ENCODE measurements at regions of chr3 and their contacts with region 1.

Region 1: GRCh38 chr3:15064835-15065549 is at the start of gene MRPS25:
- DNase-seq: peak; percentile 84
- ATAC-seq: peak; percentile 97
- H3K4me3 Mint-ChIP-seq: peak within 1 kb of the TSS; percentile 98
- H3K27ac Mint-ChIP-seq: peak within 1 kb of the TSS; percentile 95
- H3K4me1 Mint-ChIP-seq: peaks cover 25% of the 10 kb centered on the region
- H3K27me3 Mint-ChIP-seq: no peaks in the 10 kb centered on the region
- CTCF ChIP-seq: no peak
- total RNA-seq, gene MRPS25: 72.4 and 85.9 TPM in 2 replicates

Region 2: DNA sequence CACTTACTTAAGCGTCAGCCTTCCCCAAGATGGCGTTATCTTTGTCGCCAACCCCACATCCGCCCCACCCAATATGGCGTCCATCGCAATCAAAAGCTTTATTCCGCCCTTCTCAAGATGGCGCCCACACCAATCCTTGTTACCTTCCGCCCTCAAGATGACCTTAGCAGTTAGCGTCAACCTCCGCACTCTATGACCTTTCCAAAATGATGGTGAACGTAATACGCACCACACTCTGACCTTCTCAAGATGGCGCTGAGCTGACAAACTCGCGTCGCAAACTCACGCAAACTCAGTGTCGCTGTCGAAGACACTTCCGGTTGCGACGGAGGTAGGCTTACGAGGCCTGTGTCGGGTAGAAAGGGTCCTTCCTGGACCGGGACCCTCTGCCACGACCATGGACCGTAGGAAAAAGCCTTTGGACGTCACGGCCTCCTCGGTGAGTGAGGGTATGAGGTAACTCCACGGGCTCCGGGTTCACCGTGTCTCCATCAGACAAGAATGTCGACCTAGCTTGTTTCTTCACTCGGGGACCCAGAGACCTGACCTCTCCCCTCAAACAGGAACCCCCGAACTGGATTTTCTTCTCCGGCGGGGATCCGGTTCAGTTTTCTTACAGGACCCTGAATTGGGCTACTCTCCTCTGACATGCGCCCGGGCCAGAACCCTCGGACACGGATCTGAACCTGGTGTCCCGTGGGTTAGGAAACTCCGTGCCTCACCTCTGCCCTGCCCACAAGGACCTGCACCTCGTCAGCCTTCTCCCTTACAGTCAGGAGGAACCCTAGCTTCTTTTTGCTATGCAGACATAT is 413.3 kb before region 1 on chr3 and contains the start of gene CCDC174:
- CTCF ChIA-PET with region 1: no interaction called
- POLR2A ChIA-PET with region 1: interaction called, 11 read pairs
- intact Hi-C with region 1: loop called (anchors 1 kb)
- DNase-seq: peak; percentile 86
- ATAC-seq: peak; percentile 97
- H3K4me3 Mint-ChIP-seq: peak within 1 kb of the TSS; percentile 95
- H3K27ac Mint-ChIP-seq: peak within 1 kb of the TSS; percentile 93
- H3K4me1 Mint-ChIP-seq: peaks cover 34% of the 10 kb centered on the region
- H3K27me3 Mint-ChIP-seq: no peaks in the 10 kb centered on the region
- CTCF ChIP-seq: no peak
- total RNA-seq, gene CCDC174: 30.2 and 32.4 TPM in 2 replicates

Region 3: DNA sequence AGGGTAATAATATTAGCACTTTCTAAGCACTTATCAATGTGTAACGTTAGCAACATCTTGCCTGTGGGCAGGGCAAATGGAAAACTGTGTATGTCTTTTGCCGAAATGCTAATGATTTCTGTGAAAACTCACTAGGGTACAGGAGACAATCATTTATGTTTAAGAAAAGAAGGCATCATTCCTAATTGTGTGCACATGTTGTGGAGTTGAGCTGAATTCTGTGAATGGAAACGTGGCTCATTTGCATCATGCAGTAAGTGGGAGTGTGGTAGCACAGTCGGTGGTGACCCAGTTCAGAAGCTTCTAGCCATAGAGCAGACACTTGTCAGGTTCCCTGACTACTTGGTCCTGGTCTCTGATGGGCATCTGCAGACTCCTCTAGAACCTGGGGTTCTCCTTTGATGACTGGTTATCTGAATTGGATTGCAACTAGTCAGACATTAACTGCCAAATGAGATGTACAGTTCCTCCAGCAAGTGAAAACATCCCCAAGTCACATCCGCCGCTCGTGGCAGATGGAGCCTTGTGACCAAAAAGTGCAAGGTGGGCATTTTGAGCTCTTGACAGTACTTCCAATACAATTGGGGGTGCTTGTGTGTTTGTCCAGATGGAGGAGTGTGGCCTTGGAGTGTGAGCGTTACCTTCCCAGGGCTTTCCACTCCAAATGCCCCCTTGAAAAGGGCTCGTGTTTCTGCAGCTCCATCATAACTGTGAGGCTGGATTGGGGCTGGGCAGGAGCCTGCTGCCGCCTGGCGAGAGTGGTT is 21.4 kb before region 1 on chr3:
- CTCF ChIA-PET with region 1: no interaction called
- POLR2A ChIA-PET with region 1: no interaction called
- intact Hi-C with region 1: no loop called
- DNase-seq: no peak
- ATAC-seq: no peak
- H3K4me3 Mint-ChIP-seq: no peak overlapping the region
- H3K27ac Mint-ChIP-seq: no peak overlapping the region
- H3K4me1 Mint-ChIP-seq: peaks cover 5% of the 10 kb centered on the region
- H3K27me3 Mint-ChIP-seq: no peaks in the 10 kb centered on the region
- CTCF ChIP-seq: no peak

Region 4: GRCh38 chr3:15427182-15427880 is 362.3 kb after region 1 on chr3 and contains the starts of genes EAF1 and METTL6:
- CTCF ChIA-PET with region 1: no interaction called
- POLR2A ChIA-PET with region 1: no interaction called
- intact Hi-C with region 1: loop called (anchors 1 kb)
- DNase-seq: peak; percentile 76
- ATAC-seq: peak; percentile 92
- H3K4me3 Mint-ChIP-seq: peak within 1 kb of the TSS; percentile 96
- H3K27ac Mint-ChIP-seq: peak within 1 kb of the TSS; percentile 95
- H3K4me1 Mint-ChIP-seq: peaks cover 50% of the 10 kb centered on the region
- H3K27me3 Mint-ChIP-seq: no peaks in the 10 kb centered on the region
- CTCF ChIP-seq: no peak
- total RNA-seq, gene EAF1: 19.2 and 19.7 TPM in 2 replicates
- total RNA-seq, gene METTL6: 18.7 and 20.2 TPM in 2 replicates

Region 5: GRCh38 chr3:15974647-15975046 is 909.7 kb after region 1 on chr3:
- CTCF ChIA-PET with region 1: no interaction called
- POLR2A ChIA-PET with region 1: no interaction called
- intact Hi-C with region 1: no loop called
- DNase-seq: no peak
- ATAC-seq: no peak
- H3K4me3 Mint-ChIP-seq: no peak overlapping the region
- H3K27ac Mint-ChIP-seq: no peak overlapping the region
- H3K4me1 Mint-ChIP-seq: no peaks in the 10 kb centered on the region
- H3K27me3 Mint-ChIP-seq: no peaks in the 10 kb centered on the region
- CTCF ChIP-seq: no peak

Measured in activated B cell treated with CpG ODN at 0.5 μM for 24 hours (primary cell).